OCI-LY7 (cell line): ENCODE measurements at regions of chr15 and their contacts with region 1.

Region 1: DNA sequence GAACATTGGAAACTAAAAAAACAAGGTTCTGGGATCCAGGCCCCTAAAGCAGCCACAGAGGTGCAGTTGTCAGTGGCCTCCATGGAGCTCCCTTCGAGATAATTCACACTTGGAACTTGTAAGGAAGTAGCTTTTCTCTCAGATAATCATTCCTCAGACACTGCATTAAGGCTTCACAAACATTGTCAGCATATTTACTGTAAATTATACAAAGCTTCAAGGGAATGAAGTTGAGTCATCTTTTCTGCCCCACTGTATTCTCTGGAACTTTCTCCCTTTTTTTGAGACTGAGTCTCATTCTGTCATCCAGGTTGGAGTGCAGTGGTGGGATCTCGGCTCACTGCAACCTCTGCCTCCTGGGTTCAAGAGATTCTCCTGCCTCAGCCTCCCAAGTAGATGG is 7.1 kb downstream of the BLOC1S6 start:
- DNase-seq: no peak
- H3K4me3 ChIP-seq: no peak overlapping the region
- H3K27ac ChIP-seq: no peak overlapping the region
- H3K4me1 ChIP-seq: peaks cover 27% of the 10 kb centered on the region
- CTCF ChIP-seq: no peak

Region 2: GRCh38 chr15:45544266-45545023 is 49.9 kb before region 1 on chr15:
- CTCF ChIA-PET with region 1: no interaction called
- POLR2A ChIA-PET with region 1: no interaction called
- intact Hi-C with region 1: no loop called
- DNase-seq: peak; percentile 18
- H3K4me3 ChIP-seq: no peak overlapping the region
- H3K27ac ChIP-seq: peak overlapping the region; percentile 46
- H3K4me1 ChIP-seq: peaks cover 29% of the 10 kb centered on the region
- CTCF ChIP-seq: no peak

Region 3: DNA sequence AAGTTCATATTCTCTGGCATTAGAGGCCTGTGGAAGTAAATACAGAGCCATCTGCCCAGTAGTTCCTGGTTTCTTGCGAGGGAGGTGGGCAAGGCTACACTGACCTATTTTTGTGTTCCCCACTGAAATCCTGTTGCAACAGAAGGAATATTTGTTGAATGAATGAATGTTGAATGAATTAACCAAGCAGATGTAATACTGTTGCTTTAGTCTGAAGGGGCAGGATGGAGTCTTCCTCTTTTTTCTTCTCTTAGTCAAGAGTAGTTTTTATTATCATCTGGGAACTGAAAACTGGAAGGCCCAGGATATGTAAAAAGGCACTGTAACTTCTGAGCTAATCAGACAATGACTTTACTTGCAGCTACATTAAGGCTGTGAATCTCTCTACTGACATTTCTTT is 10.0 kb after region 1 on chr15:
- CTCF ChIA-PET with region 1: no interaction called
- POLR2A ChIA-PET with region 1: interaction called, 25 read pairs
- intact Hi-C with region 1: loop called (anchors 2 kb)
- DNase-seq: peak; percentile 35
- H3K4me3 ChIP-seq: peak overlapping the region; percentile 29
- H3K27ac ChIP-seq: peak overlapping the region; percentile 70
- H3K4me1 ChIP-seq: peaks cover 44% of the 10 kb centered on the region
- CTCF ChIP-seq: no peak

Region 4: DNA sequence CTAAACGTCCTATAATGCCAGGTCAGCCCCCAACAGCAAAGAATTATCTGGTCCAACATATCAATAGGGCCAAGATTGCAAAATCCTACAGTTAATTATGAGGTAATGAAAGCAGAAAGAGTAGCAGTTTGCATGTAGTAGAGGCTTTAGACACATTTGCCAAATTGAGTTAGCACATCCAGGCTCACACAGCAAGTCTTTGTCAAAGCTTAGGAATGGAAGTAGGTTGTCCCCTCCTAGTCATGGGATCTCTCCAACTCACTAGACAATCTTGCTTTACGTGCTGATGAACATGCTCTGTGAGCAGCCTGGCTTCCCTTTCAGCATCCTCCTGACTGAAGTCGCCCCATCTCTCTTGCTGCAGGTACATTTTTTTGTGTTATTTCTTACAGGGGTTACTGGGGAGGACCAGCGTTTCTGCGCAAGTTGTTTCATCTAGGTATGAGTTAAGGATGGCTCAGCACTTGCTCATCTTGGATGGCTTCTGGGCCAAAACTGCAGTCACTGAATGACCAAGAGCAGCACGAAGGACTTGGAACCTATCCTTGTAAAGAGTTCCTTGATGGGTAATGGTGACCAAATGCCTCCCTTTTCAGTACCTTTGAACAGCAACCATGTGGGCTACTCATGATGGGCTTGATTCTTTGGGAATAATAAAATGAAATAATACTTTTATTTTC is 96.4 kb after region 1 on chr15:
- CTCF ChIA-PET with region 1: no interaction called
- POLR2A ChIA-PET with region 1: no interaction called
- intact Hi-C with region 1: no loop called
- DNase-seq: no peak
- H3K4me3 ChIP-seq: no peak overlapping the region
- H3K27ac ChIP-seq: no peak overlapping the region
- H3K4me1 ChIP-seq: no peaks in the 10 kb centered on the region
- CTCF ChIP-seq: no peak